IMR-90 (cell line): ENCODE measurements at regions of chr15 and their contacts with region 1.

Region 1: GRCh38 chr15:39855400-39855799 is 64.7 kb downstream of the GPR176 start:
- DNase-seq: peak; percentile 36
- ATAC-seq: no peak
- H3K4me3 ChIP-seq: no peak overlapping the region
- H3K27ac ChIP-seq: peak overlapping the region; percentile 58; the same call in 1 of the 2 replicates
- H3K4me1 ChIP-seq: peaks cover 19% of the 10 kb centered on the region
- H3K27me3 ChIP-seq: no peaks in the 10 kb centered on the region
- CTCF ChIP-seq: no peak
- POLR2A ChIP-seq: no peak
- RAD21 ChIP-seq: no peak

Region 2: GRCh38 chr15:39453500-39454073 is 401.8 kb before region 1 on chr15:
- CTCF ChIA-PET with region 1: no interaction called
- POLR2A ChIA-PET with region 1: no interaction called
- dilution Hi-C with region 1: no loop called
- in situ Hi-C with region 1: no loop called
- intact Hi-C with region 1: no loop called
- DNase-seq: no peak
- ATAC-seq: no peak
- H3K4me3 ChIP-seq: no peak overlapping the region
- H3K27ac ChIP-seq: peak overlapping the region; percentile 9; the same call in 1 of the 2 replicates
- H3K4me1 ChIP-seq: peaks cover 8% of the 10 kb centered on the region
- H3K27me3 ChIP-seq: no peaks in the 10 kb centered on the region
- CTCF ChIP-seq: no peak
- POLR2A ChIP-seq: no peak
- RAD21 ChIP-seq: no peak

Region 3: GRCh38 chr15:39819533-39819932 is 35.9 kb before region 1 on chr15:
- CTCF ChIA-PET with region 1: no interaction called
- POLR2A ChIA-PET with region 1: no interaction called
- dilution Hi-C with region 1: no loop called
- in situ Hi-C with region 1: no loop called
- intact Hi-C with region 1: loop called (anchors 5 kb)
- DNase-seq: no peak
- ATAC-seq: no peak
- H3K4me3 ChIP-seq: no peak overlapping the region
- H3K27ac ChIP-seq: no peak overlapping the region
- H3K4me1 ChIP-seq: peaks cover 7% of the 10 kb centered on the region
- H3K27me3 ChIP-seq: no peaks in the 10 kb centered on the region
- CTCF ChIP-seq: no peak
- POLR2A ChIP-seq: no peak
- RAD21 ChIP-seq: no peak

Region 4: GRCh38 chr15:39869254-39869653 is 13.9 kb after region 1 on chr15:
- CTCF ChIA-PET with region 1: no interaction called
- POLR2A ChIA-PET with region 1: no interaction called
- dilution Hi-C with region 1: no loop called
- in situ Hi-C with region 1: no loop called
- intact Hi-C with region 1: no loop called
- DNase-seq: no peak
- ATAC-seq: no peak
- H3K4me3 ChIP-seq: no peak overlapping the region
- H3K27ac ChIP-seq: no peak overlapping the region
- H3K4me1 ChIP-seq: peaks cover 12% of the 10 kb centered on the region
- H3K27me3 ChIP-seq: no peaks in the 10 kb centered on the region
- CTCF ChIP-seq: no peak
- POLR2A ChIP-seq: no peak
- RAD21 ChIP-seq: no peak